ENCODE measurements at regions of chr15 and their contacts with region 1.

Region 1: DNA sequence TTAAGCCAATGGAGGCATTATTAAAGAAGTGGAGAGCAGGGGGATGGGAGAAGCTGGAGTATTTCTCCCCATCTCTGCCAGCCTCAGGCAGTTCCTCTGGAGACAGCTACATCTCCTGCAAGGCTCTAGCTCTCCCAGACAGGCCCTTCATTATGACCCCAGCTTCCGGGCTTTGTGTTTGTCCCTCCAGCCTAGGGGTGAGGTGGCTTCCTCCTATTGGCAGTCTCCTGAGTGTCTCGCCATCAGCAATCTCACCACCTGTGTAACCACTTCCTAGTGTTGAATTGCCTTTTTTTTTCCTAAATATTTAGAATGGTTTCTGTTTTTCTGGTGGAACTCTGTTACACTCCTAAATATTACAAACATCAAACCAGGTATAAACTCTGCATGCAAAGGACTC is 122.3 kb downstream of the FAM174B start:
- DNase-seq: peak; percentile 86
- H3K4me3 ChIP-seq: no peak overlapping the region
- H3K27ac ChIP-seq: peak overlapping the region; percentile 82
- H3K4me1 ChIP-seq: peaks cover 21% of the 10 kb centered on the region
- H3K27me3 ChIP-seq: no peaks in the 10 kb centered on the region
- CTCF ChIP-seq: no peak
- POLR2A ChIP-seq: no peak

Region 2: DNA sequence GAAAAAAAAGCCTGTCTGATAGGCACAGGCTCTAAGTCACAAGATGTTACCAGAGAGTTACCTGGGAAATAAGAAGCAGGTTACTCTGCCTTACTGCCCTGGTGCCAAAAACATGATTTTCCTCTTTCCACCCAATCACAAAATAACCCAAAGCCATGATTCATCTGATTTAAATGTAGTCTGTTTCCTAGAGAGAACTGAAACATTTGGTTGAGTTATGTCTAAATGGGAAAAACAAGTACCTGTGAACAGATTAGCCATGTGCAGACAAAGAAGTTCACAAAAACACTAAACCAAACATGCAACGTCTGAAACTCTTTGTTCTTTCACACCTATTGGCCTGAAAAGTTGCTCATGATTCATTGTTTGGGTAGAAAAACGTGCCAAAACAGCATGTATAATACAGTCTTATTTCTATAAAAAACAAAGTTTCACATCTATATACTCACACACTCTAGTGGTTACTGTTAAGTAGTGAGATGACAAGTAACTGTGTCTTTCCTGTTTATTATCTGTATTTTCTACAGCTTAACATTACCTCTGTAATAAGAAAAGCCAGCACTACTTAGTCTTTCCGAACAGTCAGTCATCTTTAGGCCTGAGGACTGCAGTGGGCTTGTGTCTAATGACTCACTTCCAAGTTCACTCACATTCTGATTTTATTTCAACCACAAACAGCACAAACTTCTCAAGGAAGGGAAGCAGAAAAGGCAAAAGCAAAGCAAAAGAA is 92.1 kb after region 1 on chr15:
- CTCF ChIA-PET with region 1: no interaction called
- POLR2A ChIA-PET with region 1: no interaction called
- dilution Hi-C with region 1: no loop called
- intact Hi-C with region 1: loop called (anchors 2 kb)
- DNase-seq: peak; percentile 93
- H3K4me3 ChIP-seq: no peak overlapping the region
- H3K27ac ChIP-seq: peak overlapping the region; percentile 89
- H3K4me1 ChIP-seq: peaks cover 43% of the 10 kb centered on the region
- H3K27me3 ChIP-seq: no peaks in the 10 kb centered on the region
- CTCF ChIP-seq: no peak
- POLR2A ChIP-seq: peak; percentile 33

Region 3: GRCh38 chr15:92709110-92709790 is 176.0 kb after region 1 on chr15:
- CTCF ChIA-PET with region 1: interaction called, 18 read pairs
- POLR2A ChIA-PET with region 1: no interaction called
- dilution Hi-C with region 1: no loop called
- intact Hi-C with region 1: loop called (anchors 1 kb)
- DNase-seq: peak; percentile 79
- H3K4me3 ChIP-seq: no peak overlapping the region
- H3K27ac ChIP-seq: peak overlapping the region; percentile 84
- H3K4me1 ChIP-seq: peaks cover 30% of the 10 kb centered on the region
- H3K27me3 ChIP-seq: no peaks in the 10 kb centered on the region
- CTCF ChIP-seq: no peak
- POLR2A ChIP-seq: no peak

Region 4: GRCh38 chr15:92903941-92904831 is 370.9 kb after region 1 on chr15:
- CTCF ChIA-PET with region 1: no interaction called
- POLR2A ChIA-PET with region 1: no interaction called
- dilution Hi-C with region 1: no loop called
- intact Hi-C with region 1: loop called (anchors 10 kb)
- DNase-seq: peak; percentile 99
- H3K4me3 ChIP-seq: peak overlapping the region; percentile 64 to 100 (median 97)
- H3K27ac ChIP-seq: peak overlapping the region; percentile 98
- H3K4me1 ChIP-seq: peaks cover 54% of the 10 kb centered on the region
- H3K27me3 ChIP-seq: no peaks in the 10 kb centered on the region
- CTCF ChIP-seq: no peak
- POLR2A ChIP-seq: peak; percentile 95